IMR-90 (cell line): ENCODE measurements at regions of chr3 and their contacts with region 1.

Region 1: GRCh38 chr3:59424268-59425010 is 374.6 kb upstream of the CFAP20DC start:
- DNase-seq: peak; percentile 93
- ATAC-seq: peak; percentile 51
- H3K4me3 ChIP-seq: no peak overlapping the region
- H3K27ac ChIP-seq: peak overlapping the region; percentile 19
- H3K4me1 ChIP-seq: peaks cover 23% of the 10 kb centered on the region
- H3K27me3 ChIP-seq: no peaks in the 10 kb centered on the region; the same call in 1 of the 2 replicates
- CTCF ChIP-seq: no peak
- POLR2A ChIP-seq: no peak
- RAD21 ChIP-seq: no peak

Region 2: DNA sequence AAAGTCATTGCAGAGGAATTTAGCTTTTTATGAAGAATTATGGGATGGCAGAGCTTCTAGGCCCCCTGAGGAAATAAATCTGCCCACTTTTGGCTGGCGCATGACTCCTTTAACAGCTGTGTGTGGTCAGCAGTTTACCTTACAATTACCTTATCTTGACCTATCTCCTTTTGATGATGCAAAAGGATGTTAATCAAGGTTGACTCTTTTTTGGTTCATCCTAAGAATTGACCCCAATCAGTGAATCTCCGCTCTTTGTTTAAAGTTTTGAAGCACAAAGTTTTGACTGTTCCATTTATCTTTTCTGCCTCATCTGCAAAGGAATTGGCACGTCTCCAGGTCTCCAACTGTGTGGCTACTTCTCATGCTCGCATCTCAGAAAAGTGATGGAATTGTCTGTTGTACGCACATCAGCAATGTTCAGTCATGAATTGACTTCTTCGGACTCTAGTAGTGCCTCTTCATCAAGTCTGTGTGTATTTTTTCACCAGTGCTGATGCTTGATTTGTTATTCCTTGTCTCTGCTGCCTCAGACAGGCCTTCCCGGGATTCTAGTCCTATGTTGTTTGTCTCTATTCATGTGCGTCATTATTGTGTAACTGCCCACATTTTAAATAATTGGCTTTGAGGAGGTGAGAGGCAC is 178.5 kb before region 1 on chr3:
- CTCF ChIA-PET with region 1: no interaction called
- POLR2A ChIA-PET with region 1: no interaction called
- dilution Hi-C with region 1: no loop called
- in situ Hi-C with region 1: no loop called
- intact Hi-C with region 1: loop called (anchors 10 kb)
- DNase-seq: peak; percentile 91
- ATAC-seq: peak; percentile 75
- H3K4me3 ChIP-seq: no peak overlapping the region
- H3K27ac ChIP-seq: peak overlapping the region; percentile 35; the same call in 1 of the 2 replicates
- H3K4me1 ChIP-seq: peaks cover 17% of the 10 kb centered on the region
- H3K27me3 ChIP-seq: no peaks in the 10 kb centered on the region
- CTCF ChIP-seq: no peak
- POLR2A ChIP-seq: no peak
- RAD21 ChIP-seq: no peak

Region 3: DNA sequence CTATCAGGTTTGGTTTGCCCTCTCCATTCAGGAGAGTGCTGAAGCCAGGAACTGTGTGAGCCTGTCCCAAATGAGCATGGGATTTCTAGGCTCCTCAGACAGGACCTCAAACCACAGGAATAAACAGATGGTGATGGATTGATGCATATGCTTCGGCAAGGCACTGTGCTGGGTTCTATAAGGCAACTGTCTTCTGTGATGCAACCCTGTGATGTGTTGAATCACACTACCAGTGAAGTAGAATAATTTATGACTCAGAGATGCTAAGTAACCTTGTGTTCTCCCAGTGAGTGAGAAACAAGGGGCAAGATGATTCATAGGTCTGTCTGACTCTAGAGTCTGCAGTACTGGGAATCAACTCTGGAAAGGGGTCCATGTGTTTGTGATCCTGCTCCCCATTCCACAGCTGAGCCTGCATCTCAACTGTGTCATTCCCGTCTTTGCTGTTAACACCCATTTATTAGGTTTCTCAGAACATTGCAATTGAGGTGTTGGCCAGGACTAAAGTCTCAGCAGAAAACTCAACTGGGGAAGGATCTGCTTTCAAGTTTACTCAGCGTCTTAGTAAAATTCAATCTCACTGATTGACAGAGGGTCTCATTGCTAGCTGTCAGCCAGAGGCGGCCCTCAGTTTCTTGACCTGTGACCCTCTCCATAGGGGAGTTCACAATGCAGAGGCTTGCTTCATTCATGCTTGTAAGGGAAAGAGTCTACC is 135.4 kb after region 1 on chr3:
- CTCF ChIA-PET with region 1: no interaction called
- POLR2A ChIA-PET with region 1: no interaction called
- dilution Hi-C with region 1: no loop called
- in situ Hi-C with region 1: no loop called
- intact Hi-C with region 1: loop called (anchors 5 kb)
- DNase-seq: peak; percentile 97
- ATAC-seq: peak; percentile 90
- H3K4me3 ChIP-seq: no peak overlapping the region
- H3K27ac ChIP-seq: no peak overlapping the region
- H3K4me1 ChIP-seq: peaks cover 13% of the 10 kb centered on the region
- H3K27me3 ChIP-seq: no peaks in the 10 kb centered on the region
- CTCF ChIP-seq: no peak
- POLR2A ChIP-seq: no peak
- RAD21 ChIP-seq: no peak

Region 4: DNA sequence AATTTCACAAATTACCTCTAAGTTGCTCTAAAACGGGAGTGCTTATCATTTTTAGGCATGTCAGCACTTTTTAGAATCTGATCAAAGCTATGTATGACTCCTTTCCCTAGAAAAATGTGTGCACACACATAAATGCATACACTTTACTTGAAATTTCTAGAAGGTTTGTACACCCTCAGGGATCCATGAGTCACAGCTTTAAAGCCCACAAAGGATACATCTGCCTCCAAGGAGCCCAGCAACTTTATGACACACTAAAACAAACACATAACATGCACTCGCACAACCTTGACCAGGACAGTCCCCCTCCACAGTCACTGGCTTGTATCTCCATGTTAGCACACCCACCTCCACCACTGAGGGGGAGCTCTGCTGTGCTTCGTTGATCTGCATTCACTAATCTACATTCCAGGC is 347.3 kb after region 1 on chr3:
- CTCF ChIA-PET with region 1: no interaction called
- POLR2A ChIA-PET with region 1: no interaction called
- dilution Hi-C with region 1: no loop called
- in situ Hi-C with region 1: no loop called
- intact Hi-C with region 1: loop called (anchors 10 kb)
- DNase-seq: peak; percentile 94
- ATAC-seq: peak; percentile 86
- H3K4me3 ChIP-seq: no peak overlapping the region
- H3K27ac ChIP-seq: peak overlapping the region; percentile 22; the same call in 1 of the 2 replicates
- H3K4me1 ChIP-seq: peaks cover 15% of the 10 kb centered on the region
- H3K27me3 ChIP-seq: no peaks in the 10 kb centered on the region
- CTCF ChIP-seq: no peak
- POLR2A ChIP-seq: no peak
- RAD21 ChIP-seq: no peak